Vagina (tissue), 2 donors: ENCODE measurements at regions of chr2 and their contacts with region 1.

Region 1: DNA sequence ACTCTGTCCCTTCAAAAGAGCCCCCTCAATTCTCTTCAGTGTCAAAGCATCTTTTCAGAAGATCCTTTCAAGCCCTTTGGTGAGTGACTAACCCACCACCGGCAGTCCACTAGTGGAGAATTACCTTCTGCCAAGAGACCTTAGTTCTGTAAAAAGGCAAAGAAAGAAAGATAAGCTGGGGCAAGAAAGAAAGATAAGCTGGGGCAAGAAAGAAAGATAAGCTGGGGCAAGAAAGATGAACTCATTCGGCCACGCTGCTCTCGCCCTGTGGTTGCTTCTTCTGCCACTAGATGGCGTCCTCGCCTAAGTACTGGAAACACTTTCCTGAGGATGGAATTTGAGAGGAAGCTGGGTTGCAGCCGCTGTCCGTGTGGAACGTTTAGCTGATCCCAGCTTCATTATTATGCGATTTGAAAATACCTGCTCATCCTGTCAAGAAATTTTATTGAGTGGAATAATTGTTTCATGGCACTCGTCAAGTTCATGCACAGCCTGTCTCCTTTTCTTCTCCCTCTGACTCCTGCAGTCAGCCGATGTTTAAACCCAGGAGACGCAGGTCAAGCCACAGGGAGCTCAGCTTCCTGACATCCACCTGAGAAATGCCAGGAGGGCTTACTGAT is 17.3 kb upstream of the ANXA4 start:
- DNase-seq: no peak
- H3K4me3 ChIP-seq: peak overlapping the region in 1 of 2 donors; percentile 23
- H3K27ac ChIP-seq: no peak overlapping the region
- H3K4me1 ChIP-seq: no peaks in the 10 kb centered on the region
- H3K27me3 ChIP-seq: no peaks in the 10 kb centered on the region
- CTCF ChIP-seq: peak; percentile 86 to 97 (median 97)
- POLR2A ChIP-seq: no peak

Region 2: DNA sequence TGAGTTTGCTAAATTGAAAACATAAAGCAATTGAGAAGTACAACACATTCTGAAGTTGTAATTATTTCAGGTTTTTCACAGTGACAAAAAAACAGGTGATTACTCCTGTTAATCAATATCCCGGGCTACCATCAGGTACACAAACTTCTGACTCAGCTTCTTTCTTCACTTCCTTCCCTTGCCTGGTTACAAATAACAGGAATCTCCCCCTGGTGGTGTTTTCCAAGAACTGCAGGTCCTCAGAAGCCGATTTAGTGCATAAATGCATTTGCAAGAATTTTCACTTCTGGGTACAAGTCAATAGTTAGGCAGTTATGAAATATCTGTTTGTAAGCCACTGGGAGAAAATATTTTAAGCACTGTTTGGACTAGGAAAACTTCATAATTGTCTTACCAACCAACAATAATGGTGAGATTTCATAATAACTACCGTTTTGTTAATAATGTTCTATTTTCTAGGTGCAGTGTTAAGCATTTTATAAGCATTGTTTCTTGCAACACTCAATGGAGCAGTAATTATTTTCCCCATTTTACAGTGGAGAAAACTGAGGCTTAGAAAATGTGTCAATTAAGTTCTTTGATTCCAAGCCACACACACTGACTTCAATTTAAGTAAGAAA is 92.4 kb after region 1 on chr2:
- intact Hi-C with region 1: loop called (anchors 5 kb)
- DNase-seq: no peak
- H3K4me3 ChIP-seq: no peak overlapping the region
- H3K27ac ChIP-seq: no peak overlapping the region
- H3K4me1 ChIP-seq: no peaks in the 10 kb centered on the region
- H3K27me3 ChIP-seq: no peaks in the 10 kb centered on the region
- CTCF ChIP-seq: peak; percentile 91 to 98 (median 96)
- POLR2A ChIP-seq: no peak